ENCODE measurements at regions of chr10 and their contacts with region 1.

Region 1: GRCh38 chr10:114822444-114823076 is 980 bp downstream of the FHIP2A start:
- DNase-seq: peak; percentile 33
- H3K4me3 ChIP-seq: peak overlapping the region; percentile 92
- H3K27ac ChIP-seq: peak overlapping the region; percentile 96
- H3K4me1 ChIP-seq: no peaks in the 10 kb centered on the region
- H3K27me3 ChIP-seq: peaks cover 3% of the 10 kb centered on the region
- CTCF ChIP-seq: no peak

Region 2: GRCh38 chr10:114500643-114501042 is 321.9 kb before region 1 on chr10:
- CTCF ChIA-PET with region 1: interaction called, 13 read pairs
- POLR2A ChIA-PET with region 1: no interaction called
- intact Hi-C with region 1: no loop called
- DNase-seq: no peak
- H3K4me3 ChIP-seq: no peak overlapping the region
- H3K27ac ChIP-seq: no peak overlapping the region
- H3K4me1 ChIP-seq: peaks cover 9% of the 10 kb centered on the region
- H3K27me3 ChIP-seq: no peaks in the 10 kb centered on the region
- CTCF ChIP-seq: no peak

Region 3: GRCh38 chr10:115001506-115002381 is 179.2 kb after region 1 on chr10:
- CTCF ChIA-PET with region 1: no interaction called
- POLR2A ChIA-PET with region 1: no interaction called
- intact Hi-C with region 1: no loop called
- DNase-seq: no peak
- H3K4me3 ChIP-seq: no peak overlapping the region
- H3K27ac ChIP-seq: no peak overlapping the region
- H3K4me1 ChIP-seq: no peaks in the 10 kb centered on the region
- H3K27me3 ChIP-seq: no peaks in the 10 kb centered on the region
- CTCF ChIP-seq: no peak

Measured in A673 (cell line).